ENCODE measurements at regions of chr18 and their contacts with region 1.

Region 1: GRCh38 chr18:2985628-2986027 is 27.3 kb downstream of the LPIN2 start:
- DNase-seq: peak in 1 of 5 donors; percentile 70
- H3K4me3 ChIP-seq: no peak overlapping the region
- H3K4me3 Mint-ChIP-seq: peak overlapping the region in 1 of 7 donors; percentile 38
- H3K27ac ChIP-seq: no peak overlapping the region
- H3K27ac Mint-ChIP-seq: peak overlapping the region in 4 of 8 donors; percentile 17 to 78 (median 36)
- H3K4me1 ChIP-seq: peaks cover 40% of the 10 kb centered on the region
- H3K4me1 Mint-ChIP-seq: peaks cover 60 to 84% (median 75%) of the 10 kb centered on the region in 3 donors
- H3K27me3 ChIP-seq: no peaks in the 10 kb centered on the region
- H3K27me3 Mint-ChIP-seq: no peaks in the 10 kb centered on the region

Region 2: GRCh38 chr18:2932247-2933181 is 53.1 kb before region 1 on chr18:
- CTCF ChIA-PET with region 1: interaction called, 34 read pairs
- POLR2A ChIA-PET with region 1: interaction called, 10 read pairs
- DNase-seq: peak in 4 of 5 donors; percentile 22 to 69 (median 60)
- H3K4me3 ChIP-seq: no peak overlapping the region
- H3K4me3 Mint-ChIP-seq: peak overlapping the region in 4 of 7 donors; percentile 8 to 42 (median 20)
- H3K27ac ChIP-seq: no peak overlapping the region
- H3K27ac Mint-ChIP-seq: peak overlapping the region; percentile 85 to 96 (median 91)
- H3K4me1 ChIP-seq: peaks cover 9% of the 10 kb centered on the region
- H3K4me1 Mint-ChIP-seq: peaks cover 29 to 47% (median 45%) of the 10 kb centered on the region in 3 donors
- H3K27me3 ChIP-seq: no peaks in the 10 kb centered on the region
- H3K27me3 Mint-ChIP-seq: no peaks in the 10 kb centered on the region

Region 3: DNA sequence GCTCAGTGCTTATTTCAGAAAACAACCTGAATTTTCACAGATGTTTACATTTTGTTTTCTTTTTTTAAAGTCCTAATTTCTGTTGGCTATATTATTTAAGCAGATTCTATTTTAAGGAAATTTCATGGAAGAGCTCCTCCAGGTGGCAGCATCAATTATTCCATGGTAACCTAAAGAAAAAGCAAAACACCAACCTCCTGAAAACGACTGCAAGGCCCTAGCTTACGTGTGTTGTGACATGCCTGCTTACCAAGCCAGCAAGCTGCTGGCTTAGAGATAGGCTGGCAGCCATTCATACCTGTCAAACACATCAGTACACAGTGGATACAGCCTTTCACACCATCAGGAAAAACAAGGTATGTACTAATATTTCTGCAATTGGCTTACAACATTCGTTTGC is 37.6 kb before region 1 on chr18:
- CTCF ChIA-PET with region 1: interaction called, 44 read pairs
- POLR2A ChIA-PET with region 1: interaction called, 4 read pairs
- DNase-seq: no peak
- H3K4me3 ChIP-seq: no peak overlapping the region
- H3K4me3 Mint-ChIP-seq: no peak overlapping the region
- H3K27ac ChIP-seq: no peak overlapping the region
- H3K27ac Mint-ChIP-seq: peak overlapping the region in 3 of 8 donors; percentile 15 to 87 (median 26)
- H3K4me1 ChIP-seq: peaks cover 13% of the 10 kb centered on the region
- H3K4me1 Mint-ChIP-seq: peaks cover 51 to 79% (median 70%) of the 10 kb centered on the region in 3 donors
- H3K27me3 ChIP-seq: no peaks in the 10 kb centered on the region
- H3K27me3 Mint-ChIP-seq: no peaks in the 10 kb centered on the region

Region 4: DNA sequence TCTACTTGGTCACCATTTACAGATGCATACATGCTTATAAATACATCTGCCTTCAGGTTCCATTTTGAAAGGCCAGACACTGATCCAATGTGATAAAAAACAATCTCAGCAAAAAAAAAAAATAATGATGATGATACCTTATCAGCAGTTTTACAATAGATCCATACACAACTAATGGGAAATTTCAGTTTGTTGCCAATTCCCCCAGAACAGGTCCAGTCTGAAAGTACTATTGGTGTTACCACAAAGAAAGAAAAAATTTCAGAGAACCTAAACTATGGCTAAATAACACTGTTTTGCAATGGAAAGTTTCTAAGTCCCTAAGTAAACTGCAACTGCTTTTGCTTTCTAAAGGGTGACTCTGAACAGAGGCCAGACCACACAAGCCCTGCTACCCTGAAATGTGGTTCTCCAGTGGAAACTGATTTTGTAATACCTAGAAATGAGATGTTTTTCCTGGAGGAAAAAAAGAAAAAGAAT is 26.8 kb before region 1 on chr18:
- CTCF ChIA-PET with region 1: interaction called, 77 read pairs
- POLR2A ChIA-PET with region 1: interaction called, 34 read pairs
- DNase-seq: peak in 3 of 5 donors; percentile 18 to 63 (median 23)
- H3K4me3 ChIP-seq: peak overlapping the region; percentile 12
- H3K4me3 Mint-ChIP-seq: peak overlapping the region; percentile 59 to 91 (median 80)
- H3K27ac ChIP-seq: peak overlapping the region; percentile 12
- H3K27ac Mint-ChIP-seq: peak overlapping the region; percentile 94 to 99 (median 96)
- H3K4me1 ChIP-seq: peaks cover 93% of the 10 kb centered on the region
- H3K4me1 Mint-ChIP-seq: peaks cover 88 to 95% (median 95%) of the 10 kb centered on the region in 3 donors
- H3K27me3 ChIP-seq: no peaks in the 10 kb centered on the region
- H3K27me3 Mint-ChIP-seq: no peaks in the 10 kb centered on the region

Region 5: DNA sequence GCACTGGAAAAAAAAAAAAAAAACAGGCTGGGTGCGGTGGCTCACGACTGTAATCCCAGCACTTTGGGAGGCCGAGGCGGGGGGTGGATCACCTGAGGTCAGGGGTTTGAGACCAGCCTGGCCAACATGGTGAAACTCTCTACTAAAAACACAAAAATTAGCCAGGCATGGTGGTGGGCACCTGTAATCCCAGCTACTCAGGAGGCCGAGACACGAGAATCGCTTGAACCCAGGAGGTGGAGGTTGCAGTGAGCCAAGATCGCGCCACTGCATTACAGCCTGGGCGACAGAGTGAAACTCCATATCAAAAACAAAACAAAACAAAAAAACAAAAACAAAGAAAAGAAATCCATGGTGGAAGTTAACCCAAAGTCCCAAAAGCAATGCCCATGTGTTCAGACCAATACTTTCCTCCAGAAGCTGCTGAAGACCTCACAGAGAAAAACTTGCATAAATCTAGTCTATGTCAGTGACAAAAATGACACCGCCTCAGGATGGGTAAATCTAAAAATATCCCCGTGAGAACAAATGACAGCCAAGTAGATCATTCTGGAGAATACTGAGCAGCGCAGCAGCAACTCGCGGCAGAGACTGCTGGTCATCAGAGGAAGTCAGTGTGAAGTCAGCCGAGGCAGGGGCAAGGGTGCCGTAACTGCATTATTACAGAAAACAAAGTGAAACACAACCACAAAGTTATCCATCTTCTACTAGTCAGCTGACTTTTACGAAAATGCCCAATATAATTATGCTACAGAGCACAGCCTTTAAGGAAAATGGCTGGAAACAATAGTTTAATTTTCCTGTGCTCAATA is 13.7 kb before region 1 on chr18:
- CTCF ChIA-PET with region 1: interaction called, 37 read pairs
- POLR2A ChIA-PET with region 1: interaction called, 21 read pairs
- DNase-seq: peak; percentile 51 to 87 (median 58)
- H3K4me3 ChIP-seq: peak overlapping the region; percentile 51
- H3K4me3 Mint-ChIP-seq: peak overlapping the region; percentile 81 to 91 (median 87)
- H3K27ac ChIP-seq: peak overlapping the region; percentile 71
- H3K27ac Mint-ChIP-seq: peak overlapping the region; percentile 96 to 100 (median 98)
- H3K4me1 ChIP-seq: peaks cover 95% of the 10 kb centered on the region
- H3K4me1 Mint-ChIP-seq: peaks cover 80 to 97% (median 95%) of the 10 kb centered on the region in 3 donors
- H3K27me3 ChIP-seq: no peaks in the 10 kb centered on the region
- H3K27me3 Mint-ChIP-seq: no peaks in the 10 kb centered on the region

Region 6: DNA sequence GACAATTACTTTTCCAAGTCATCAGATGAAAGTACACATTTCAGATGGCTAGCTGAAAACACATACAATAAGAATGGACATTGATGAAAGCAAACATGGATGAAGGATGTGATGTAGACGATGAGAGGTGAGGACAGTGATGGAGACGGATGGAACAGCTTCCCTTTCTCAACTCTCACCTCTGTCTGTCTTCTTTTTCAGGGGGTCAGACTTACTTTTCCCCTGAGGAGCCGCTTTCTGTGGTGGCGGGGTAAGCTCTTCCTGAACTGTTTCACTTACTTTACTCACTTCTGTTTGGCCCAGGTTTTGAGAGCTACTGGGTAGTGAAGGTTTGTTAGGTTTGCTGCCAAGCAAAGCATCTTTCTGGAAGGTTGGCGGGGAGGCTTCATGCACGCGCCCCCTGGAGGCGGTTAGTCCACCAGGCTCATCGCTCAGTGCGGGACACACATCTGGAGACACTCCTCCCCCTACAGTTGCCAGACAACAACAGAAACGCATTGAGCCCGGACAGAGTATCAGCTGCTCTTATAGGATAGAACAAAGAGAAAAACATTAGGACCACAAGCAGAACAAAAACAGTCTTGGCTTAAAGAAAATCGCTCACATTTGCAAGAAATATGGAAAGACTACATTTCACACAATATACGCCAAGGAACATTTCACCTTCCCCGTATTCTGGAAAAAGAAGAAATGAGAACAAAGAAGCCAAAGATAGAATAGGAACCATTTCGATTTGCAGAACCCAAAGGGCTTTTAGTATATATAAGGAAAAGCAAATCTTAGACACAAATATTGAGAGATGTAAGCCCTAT is 143.6 kb after region 1 on chr18:
- CTCF ChIA-PET with region 1: interaction called, 19 read pairs
- POLR2A ChIA-PET with region 1: no interaction called
- DNase-seq: peak; percentile 62 to 84 (median 67)
- H3K4me3 ChIP-seq: no peak overlapping the region
- H3K4me3 Mint-ChIP-seq: no peak overlapping the region
- H3K27ac ChIP-seq: no peak overlapping the region
- H3K27ac Mint-ChIP-seq: peak overlapping the region in 4 of 8 donors; percentile 10 to 58 (median 29)
- H3K4me1 ChIP-seq: peaks cover 8% of the 10 kb centered on the region
- H3K4me1 Mint-ChIP-seq: peaks cover 9% of the 10 kb centered on the region in 3 donors
- H3K27me3 ChIP-seq: no peaks in the 10 kb centered on the region
- H3K27me3 Mint-ChIP-seq: peaks cover 0 to 3% of the 10 kb centered on the region in 2 donors

Region 7: DNA sequence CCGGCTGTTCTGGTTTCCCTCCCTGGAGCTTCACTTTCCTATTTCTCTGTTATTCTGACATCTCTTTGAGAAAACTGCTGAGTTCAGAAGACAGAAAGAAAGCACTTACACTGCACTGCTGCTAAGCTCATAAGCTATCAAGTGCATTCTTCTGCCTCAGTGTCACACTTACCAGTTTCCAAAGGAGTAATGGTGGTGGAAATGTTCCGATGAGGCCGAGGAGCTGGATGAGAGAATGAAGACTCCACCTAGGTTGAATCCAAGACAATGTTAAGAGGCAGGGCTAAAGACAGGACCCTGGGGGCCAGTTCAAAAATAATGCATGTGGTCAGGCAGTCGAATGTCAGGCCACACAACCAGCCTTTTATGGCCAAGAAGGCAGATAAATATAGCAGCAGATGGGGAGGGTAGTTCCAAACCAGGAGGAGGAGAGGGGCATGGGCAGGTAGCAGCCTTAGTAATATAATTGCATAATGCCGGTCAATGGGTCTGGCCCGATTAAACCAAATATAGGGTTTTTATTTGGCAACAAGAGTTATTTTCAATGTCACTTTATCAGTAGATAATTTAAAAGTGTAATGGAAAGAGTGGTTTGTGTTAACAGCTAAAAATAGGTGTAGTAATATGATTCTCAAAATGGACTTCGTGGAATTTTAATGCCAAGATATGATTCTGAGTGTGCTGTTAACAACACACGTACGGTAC is 234.2 kb after region 1 on chr18 and contains the start of gene MYOM1:
- CTCF ChIA-PET with region 1: no interaction called
- POLR2A ChIA-PET with region 1: no interaction called
- DNase-seq: no peak
- H3K4me3 ChIP-seq: no peak within 1 kb of the TSS
- H3K4me3 Mint-ChIP-seq: no peak within 1 kb of the TSS
- H3K27ac ChIP-seq: no peak within 1 kb of the TSS
- H3K27ac Mint-ChIP-seq: peak within 1 kb of the TSS in 1 of 8 donors; percentile 25
- H3K4me1 ChIP-seq: no peaks in the 10 kb centered on the region
- H3K4me1 Mint-ChIP-seq: no peaks in the 10 kb centered on the region
- H3K27me3 ChIP-seq: no peaks in the 10 kb centered on the region
- H3K27me3 Mint-ChIP-seq: no peaks in the 10 kb centered on the region
- total RNA-seq, gene MYOM1: 0.84 to 1.2 TPM

Measured in CD8-positive, alpha-beta memory T cell (primary cell).